PC-3 (cell line): ENCODE measurements at regions of chr3 and their contacts with region 1.

Region 1: GRCh38 chr3:29280404-29281093 is at the start of gene RBMS3:
- DNase-seq: peak; percentile 91
- ATAC-seq: peak; percentile 83
- H3K4me3 ChIP-seq: peak within 1 kb of the TSS; percentile 71
- H3K27ac ChIP-seq: peak within 1 kb of the TSS; percentile 69
- H3K4me1 ChIP-seq: peaks cover 23% of the 10 kb centered on the region
- H3K27me3 ChIP-seq: no peaks in the 10 kb centered on the region
- CTCF ChIP-seq: peak; percentile 58
- total RNA-seq, gene RBMS3: 5.4 and 13.5 TPM in 2 replicates

Region 2: GRCh38 chr3:28951773-28952556 is 328.6 kb before region 1 on chr3:
- CTCF ChIA-PET with region 1: no interaction called
- POLR2A ChIA-PET with region 1: no interaction called
- intact Hi-C with region 1: loop called (anchors 10 kb)
- DNase-seq: peak; percentile 77
- ATAC-seq: peak; percentile 97
- H3K4me3 ChIP-seq: no peak overlapping the region; the same call in 1 of the 2 replicates
- H3K27ac ChIP-seq: peak overlapping the region; percentile 71
- H3K4me1 ChIP-seq: peaks cover 20% of the 10 kb centered on the region
- H3K27me3 ChIP-seq: no peaks in the 10 kb centered on the region
- CTCF ChIP-seq: no peak

Region 3: DNA sequence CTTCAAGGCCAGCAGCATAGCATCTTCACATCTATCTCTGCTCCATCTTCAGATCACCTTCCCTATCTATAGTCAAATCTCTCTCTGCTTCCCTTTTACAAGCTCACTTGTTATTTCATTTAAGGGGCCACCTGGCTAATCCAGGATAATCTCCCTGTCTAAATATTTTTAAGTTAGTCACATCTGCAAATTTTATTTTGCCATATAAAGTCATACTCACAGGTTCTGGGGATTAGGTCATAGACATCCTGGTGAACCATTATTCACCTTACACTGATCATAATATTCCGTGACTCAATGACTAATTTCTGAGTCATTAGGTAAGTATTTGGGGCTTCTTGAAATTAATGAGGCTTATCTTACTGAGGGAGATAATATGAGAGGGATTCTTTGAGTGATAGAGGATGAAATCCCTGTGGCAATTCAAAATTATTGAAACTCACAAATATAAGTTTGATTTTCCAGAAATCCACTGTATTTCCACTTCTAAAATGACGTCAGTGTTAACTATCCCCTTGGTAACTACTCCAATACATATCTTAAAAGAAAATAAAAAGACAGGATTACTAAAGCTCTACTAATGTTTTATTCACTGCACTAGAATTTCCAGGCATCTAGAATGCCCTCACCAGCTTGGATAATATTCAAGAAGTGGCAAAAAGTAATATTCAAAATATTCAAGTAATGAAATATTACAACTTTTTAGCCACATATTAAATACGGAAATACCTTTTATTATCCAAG is 93.4 kb before region 1 on chr3:
- CTCF ChIA-PET with region 1: interaction called, 7 read pairs
- POLR2A ChIA-PET with region 1: interaction called, 4 read pairs
- intact Hi-C with region 1: loop called (anchors 1 kb)
- DNase-seq: peak; percentile 99
- ATAC-seq: peak; percentile 79
- H3K4me3 ChIP-seq: no peak overlapping the region; the same call in 1 of the 2 replicates
- H3K27ac ChIP-seq: peak overlapping the region; percentile 98
- H3K4me1 ChIP-seq: peaks cover 45% of the 10 kb centered on the region
- H3K27me3 ChIP-seq: no peaks in the 10 kb centered on the region
- CTCF ChIP-seq: no peak

Region 4: DNA sequence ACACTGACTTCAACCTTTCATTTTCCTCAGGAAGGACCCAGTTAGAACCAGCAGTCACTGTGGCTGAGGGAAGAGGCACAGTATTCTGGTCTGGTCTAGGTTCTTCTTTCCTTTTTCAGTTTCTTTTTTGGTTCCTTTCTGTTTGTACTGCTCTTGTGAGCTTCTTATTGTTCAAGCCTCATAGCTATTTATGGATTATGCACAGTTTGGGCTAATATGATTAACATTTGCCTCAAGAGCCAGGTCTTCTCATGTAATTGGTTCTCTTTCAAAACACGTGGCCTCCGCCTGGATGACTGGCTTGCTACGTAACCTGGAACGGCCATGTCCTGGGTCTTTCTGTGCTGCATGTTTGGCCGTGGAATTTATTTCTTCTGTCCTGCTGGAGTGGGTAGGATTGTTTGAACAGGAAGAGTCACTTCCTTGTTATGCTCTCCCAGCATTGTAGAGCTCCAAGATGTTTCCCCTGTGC is 43.7 kb after region 1 on chr3:
- CTCF ChIA-PET with region 1: no interaction called
- POLR2A ChIA-PET with region 1: interaction called, 9 read pairs
- intact Hi-C with region 1: loop called (anchors 2 kb)
- DNase-seq: peak; percentile 85
- ATAC-seq: peak; percentile 99
- H3K4me3 ChIP-seq: peak overlapping the region; percentile 31
- H3K27ac ChIP-seq: peak overlapping the region; percentile 80
- H3K4me1 ChIP-seq: peaks cover 22% of the 10 kb centered on the region
- H3K27me3 ChIP-seq: no peaks in the 10 kb centered on the region
- CTCF ChIP-seq: no peak

Region 5: GRCh38 chr3:29420106-29420505 is 139.6 kb after region 1 on chr3:
- CTCF ChIA-PET with region 1: no interaction called
- POLR2A ChIA-PET with region 1: no interaction called
- intact Hi-C with region 1: no loop called
- DNase-seq: no peak
- ATAC-seq: no peak
- H3K4me3 ChIP-seq: no peak overlapping the region
- H3K27ac ChIP-seq: no peak overlapping the region
- H3K4me1 ChIP-seq: no peaks in the 10 kb centered on the region
- H3K27me3 ChIP-seq: no peaks in the 10 kb centered on the region
- CTCF ChIP-seq: no peak

Region 6: DNA sequence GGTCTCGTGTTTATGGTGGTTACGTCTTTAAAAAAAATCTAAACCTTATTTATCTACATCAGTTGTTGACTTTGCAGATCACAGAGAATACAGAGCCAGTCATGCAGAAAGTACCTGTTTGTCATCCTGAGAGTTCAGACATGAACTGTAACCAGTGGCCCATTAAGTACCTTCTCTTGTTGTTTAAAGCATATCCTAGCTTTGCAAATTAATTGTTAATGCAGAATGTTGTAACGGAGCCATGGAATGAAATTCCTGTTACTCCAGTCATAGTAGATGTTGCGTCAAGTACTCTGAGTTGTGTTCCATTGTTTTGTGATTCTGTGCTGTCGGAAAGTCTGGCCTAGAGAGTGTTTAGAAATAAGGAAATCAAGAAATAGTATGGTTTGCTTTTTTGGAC is 205.5 kb after region 1 on chr3:
- CTCF ChIA-PET with region 1: interaction called, 5 read pairs
- POLR2A ChIA-PET with region 1: no interaction called
- intact Hi-C with region 1: loop called (anchors 1 kb)
- DNase-seq: peak; percentile 88
- ATAC-seq: peak; percentile 93
- H3K4me3 ChIP-seq: peak overlapping the region; percentile 34; the same call in 1 of the 2 replicates
- H3K27ac ChIP-seq: peak overlapping the region; percentile 92
- H3K4me1 ChIP-seq: peaks cover 33% of the 10 kb centered on the region
- H3K27me3 ChIP-seq: no peaks in the 10 kb centered on the region
- CTCF ChIP-seq: no peak

Region 7: DNA sequence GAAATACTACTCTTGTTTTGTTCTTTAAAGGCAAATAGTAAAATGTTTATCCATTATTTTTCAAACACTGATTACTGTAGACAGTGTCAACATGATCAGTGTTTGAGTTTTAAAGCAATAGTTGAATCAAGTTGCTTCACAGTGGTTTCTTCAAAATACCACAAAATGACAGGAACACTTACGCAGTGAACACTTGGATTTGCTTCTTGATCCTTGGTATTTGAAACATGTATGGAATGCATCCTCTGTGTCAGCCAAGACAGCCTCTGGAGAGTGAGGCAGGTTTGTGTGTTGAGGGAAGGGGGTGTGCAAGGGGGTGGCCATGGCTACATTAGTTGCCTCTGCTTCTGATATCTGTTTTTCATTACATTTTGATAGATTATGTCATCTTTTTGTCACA is 413.3 kb after region 1 on chr3:
- CTCF ChIA-PET with region 1: no interaction called
- POLR2A ChIA-PET with region 1: no interaction called
- intact Hi-C with region 1: loop called (anchors 2 kb)
- DNase-seq: peak; percentile 91
- ATAC-seq: peak; percentile 77
- H3K4me3 ChIP-seq: peak overlapping the region; percentile 13; the same call in 1 of the 2 replicates
- H3K27ac ChIP-seq: peak overlapping the region; percentile 53
- H3K4me1 ChIP-seq: peaks cover 38% of the 10 kb centered on the region
- H3K27me3 ChIP-seq: no peaks in the 10 kb centered on the region
- CTCF ChIP-seq: no peak